SK-N-SH (cell line): ENCODE measurements at regions of chr5 and their contacts with region 1.

Region 1: DNA sequence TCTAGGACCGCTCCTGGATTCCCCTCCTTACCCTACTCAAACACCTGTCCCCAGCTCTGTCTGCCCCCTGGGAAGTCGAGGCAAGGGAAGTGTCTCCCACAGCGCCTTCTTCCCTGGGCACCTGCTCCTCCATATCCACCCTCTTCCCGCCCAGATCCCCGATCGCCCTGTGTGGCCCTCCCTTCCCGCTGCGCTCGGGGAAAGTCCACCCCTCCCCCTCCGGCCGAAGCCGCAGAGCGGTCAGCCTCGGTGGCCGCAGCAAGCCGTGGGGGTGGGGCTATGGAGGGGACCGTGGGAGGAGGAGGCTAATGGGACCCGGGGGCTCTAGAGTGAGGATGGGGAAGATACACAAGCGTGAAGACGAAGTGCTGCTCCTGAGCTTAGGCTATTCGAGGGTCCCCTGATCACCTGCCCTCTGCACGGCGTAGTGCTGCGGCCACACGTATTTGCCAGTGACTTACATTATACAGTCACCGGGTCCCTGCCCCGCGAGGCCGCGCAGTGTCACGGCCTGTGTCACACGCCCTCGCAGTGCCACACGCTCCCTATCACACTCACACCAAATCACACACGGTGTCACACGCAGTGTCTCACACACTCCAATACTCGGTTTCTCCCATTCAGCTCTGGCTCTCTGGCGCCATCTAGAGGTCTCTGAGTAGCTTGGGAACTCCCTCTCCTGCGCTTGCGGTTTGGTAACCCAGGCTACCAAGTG is 658 bp upstream of the PCDH1 start:
- DNase-seq: peak; percentile 74
- H3K4me3 ChIP-seq: peak overlapping the region; percentile 55 to 63
- H3K27ac ChIP-seq: no peak overlapping the region; a peak in 1 of 4 replicates
- H3K4me1 ChIP-seq: peaks cover 4 to 69% of the 10 kb centered on the region in 2 experiments; a peak in 2 of 4 replicates
- H3K27me3 ChIP-seq: peaks cover 78% of the 10 kb centered on the region
- CTCF ChIP-seq: peak; percentile 96
- EP300 ChIP-seq: no peak
- RAD21 ChIP-seq: peak; percentile 95

Region 2: DNA sequence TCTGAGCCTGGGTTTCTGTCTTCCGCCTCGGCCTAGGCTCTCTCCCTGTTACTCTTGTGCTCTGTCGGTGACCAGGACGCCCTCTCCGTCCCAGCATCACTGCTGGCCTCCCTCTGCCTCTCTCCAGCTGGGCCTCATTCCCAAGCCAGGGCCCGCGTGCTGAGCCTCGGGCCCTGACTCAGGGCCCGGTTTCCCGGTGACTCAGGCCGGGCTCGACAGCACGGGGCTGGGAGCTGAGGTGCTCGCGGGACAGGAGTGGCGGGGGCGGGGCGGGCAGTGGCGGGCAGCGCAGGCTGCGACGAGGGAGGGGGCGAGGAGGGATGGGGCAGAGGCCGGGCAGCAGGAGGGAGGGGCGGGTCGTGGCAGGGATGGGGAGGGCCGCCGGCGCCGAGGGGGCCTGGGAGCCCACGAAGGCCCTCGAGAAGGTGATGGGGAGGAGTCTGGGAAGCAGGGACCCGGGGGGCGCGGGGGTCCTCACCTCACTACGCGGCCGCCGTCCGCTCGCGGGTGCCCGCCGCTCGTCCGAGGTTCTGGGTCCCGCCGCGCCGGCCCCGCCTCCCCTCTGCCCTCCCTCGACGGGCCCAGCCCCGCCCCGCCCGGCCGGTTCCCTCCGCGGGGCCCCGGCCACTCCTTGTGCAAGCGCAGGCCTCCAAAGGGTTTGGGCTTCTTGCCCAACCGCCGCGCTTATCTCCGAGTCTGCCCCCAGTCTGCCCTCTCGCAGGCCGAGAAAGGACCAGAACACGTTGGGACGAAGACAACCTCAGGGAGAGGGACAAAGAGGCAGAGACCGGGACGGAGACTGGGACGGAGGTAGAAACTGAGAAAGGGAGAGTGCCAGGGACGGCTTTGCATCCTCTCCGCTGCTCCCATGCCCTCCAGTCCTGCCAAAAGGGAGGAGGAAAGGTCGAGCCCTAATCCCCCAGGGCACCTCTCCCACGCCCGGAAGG is 196.9 kb before region 1 on chr5 and contains the start of gene ARAP3:
- CTCF ChIA-PET with region 1: interaction called, 21 read pairs
- POLR2A ChIA-PET with region 1: interaction called, 6 read pairs
- DNase-seq: peak; percentile 91
- H3K4me3 ChIP-seq: peak within 1 kb of the TSS; percentile 52 to 55
- H3K27ac ChIP-seq: peak within 1 kb of the TSS; percentile 72 to 96
- H3K4me1 ChIP-seq: peaks cover 19 to 40% of the 10 kb centered on the region in 2 experiments; a peak in 3 of 4 replicates
- H3K27me3 ChIP-seq: no peaks in the 10 kb centered on the region
- CTCF ChIP-seq: no peak
- EP300 ChIP-seq: peak in 1 of 2 experiments; percentile 47; a peak in 1 of 4 replicates
- RAD21 ChIP-seq: no peak
- polyA plus RNA-seq, gene ARAP3: 5.5 and 6.5 TPM in 2 replicates

Region 3: GRCh38 chr5:141757402-141757801 is 121.5 kb before region 1 on chr5:
- CTCF ChIA-PET with region 1: interaction called, 19 read pairs
- POLR2A ChIA-PET with region 1: no interaction called
- DNase-seq: peak; percentile 80
- H3K4me3 ChIP-seq: no peak overlapping the region; a peak in 1 of 4 replicates
- H3K27ac ChIP-seq: no peak overlapping the region
- H3K4me1 ChIP-seq: peaks cover 0 to 27% of the 10 kb centered on the region in 2 experiments; a peak in 1 of 4 replicates
- H3K27me3 ChIP-seq: peaks cover under 1% of the 10 kb centered on the region
- CTCF ChIP-seq: peak; percentile 50
- EP300 ChIP-seq: no peak
- RAD21 ChIP-seq: peak; percentile 70

Region 4: GRCh38 chr5:141835928-141836670 is 42.8 kb before region 1 on chr5:
- CTCF ChIA-PET with region 1: interaction called, 162 read pairs
- POLR2A ChIA-PET with region 1: interaction called, 7 read pairs
- DNase-seq: no peak
- H3K4me3 ChIP-seq: no peak overlapping the region
- H3K27ac ChIP-seq: no peak overlapping the region
- H3K4me1 ChIP-seq: peaks cover 0 to 59% of the 10 kb centered on the region in 2 experiments; a peak in 2 of 4 replicates
- H3K27me3 ChIP-seq: peaks cover 17% of the 10 kb centered on the region; the same call in 1 of the 2 replicates
- CTCF ChIP-seq: no peak
- EP300 ChIP-seq: no peak
- RAD21 ChIP-seq: no peak

Region 5: DNA sequence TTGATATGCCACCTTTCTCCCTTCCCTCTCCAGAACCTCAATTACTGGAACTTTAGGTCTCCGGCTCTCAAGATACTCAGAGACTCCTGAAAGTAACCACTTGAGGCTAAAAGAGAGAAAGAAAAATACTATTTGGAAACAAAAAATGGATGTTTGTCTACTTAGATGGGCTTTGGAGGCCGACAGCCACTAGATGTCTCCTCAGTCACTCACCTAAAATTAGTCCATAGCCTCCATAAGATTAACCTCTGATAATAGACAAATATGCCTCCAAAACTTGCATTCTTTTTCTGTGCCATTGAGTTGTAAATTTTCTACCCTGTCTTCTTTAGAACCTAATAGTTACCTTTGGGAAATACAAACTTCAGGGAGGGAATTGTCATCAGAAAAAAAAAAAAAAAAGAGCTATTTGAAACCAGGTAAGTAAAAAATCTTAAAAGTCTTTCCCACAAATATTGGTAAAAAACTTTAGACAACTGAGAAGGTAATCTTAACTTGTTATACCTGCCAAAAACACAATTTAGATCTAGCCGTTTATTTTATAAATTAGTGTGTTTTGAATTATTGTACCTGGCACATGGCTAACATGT is 10.5 kb after region 1 on chr5:
- CTCF ChIA-PET with region 1: interaction called, 22 read pairs
- POLR2A ChIA-PET with region 1: no interaction called
- DNase-seq: peak; percentile 38
- H3K4me3 ChIP-seq: no peak overlapping the region
- H3K27ac ChIP-seq: no peak overlapping the region
- H3K4me1 ChIP-seq: no peaks in the 10 kb centered on the region
- H3K27me3 ChIP-seq: peaks cover 10% of the 10 kb centered on the region; the same call in 1 of the 2 replicates
- CTCF ChIP-seq: peak; percentile 48
- EP300 ChIP-seq: no peak
- RAD21 ChIP-seq: peak; percentile 69

Region 6: GRCh38 chr5:141960449-141961202 is 81.8 kb after region 1 on chr5:
- CTCF ChIA-PET with region 1: interaction called, 121 read pairs
- POLR2A ChIA-PET with region 1: interaction called, 3 read pairs
- DNase-seq: peak; percentile 87
- H3K4me3 ChIP-seq: peak overlapping the region in 1 of 2 experiments; percentile 43; a peak in 1 of 4 replicates
- H3K27ac ChIP-seq: no peak overlapping the region
- H3K4me1 ChIP-seq: peaks cover 0 to 17% of the 10 kb centered on the region in 2 experiments; a peak in 2 of 4 replicates
- H3K27me3 ChIP-seq: no peaks in the 10 kb centered on the region
- CTCF ChIP-seq: peak; percentile 89
- EP300 ChIP-seq: no peak
- RAD21 ChIP-seq: peak; percentile 90

Region 7: DNA sequence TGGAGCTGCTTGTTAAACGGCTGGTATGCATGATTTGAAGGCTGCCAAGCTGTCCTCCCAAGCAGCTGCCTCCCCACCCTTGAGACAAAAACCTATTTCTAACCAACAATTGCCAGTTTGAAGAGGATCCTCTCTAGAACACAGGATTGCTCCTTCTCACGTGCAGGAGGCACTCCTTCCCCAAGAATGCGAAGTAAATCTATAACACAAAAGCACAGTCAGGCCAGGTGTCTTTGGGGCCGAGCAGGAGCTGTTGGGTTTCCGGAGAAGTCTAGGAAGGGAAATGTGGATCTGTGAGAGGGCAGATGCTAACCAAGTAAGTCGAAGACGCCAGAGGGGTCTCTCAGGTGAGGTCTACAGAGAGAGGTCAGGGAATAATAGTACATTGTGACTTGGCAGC is 169.4 kb after region 1 on chr5:
- CTCF ChIA-PET with region 1: no interaction called
- POLR2A ChIA-PET with region 1: no interaction called
- DNase-seq: no peak
- H3K4me3 ChIP-seq: no peak overlapping the region
- H3K27ac ChIP-seq: no peak overlapping the region
- H3K4me1 ChIP-seq: peaks cover 0 to 4% of the 10 kb centered on the region in 2 experiments; a peak in 1 of 4 replicates
- H3K27me3 ChIP-seq: no peaks in the 10 kb centered on the region
- CTCF ChIP-seq: no peak
- EP300 ChIP-seq: no peak
- RAD21 ChIP-seq: no peak

Region 8: GRCh38 chr5:142133330-142134206 is 254.7 kb after region 1 on chr5:
- CTCF ChIA-PET with region 1: no interaction called
- POLR2A ChIA-PET with region 1: no interaction called
- DNase-seq: no peak
- H3K4me3 ChIP-seq: no peak overlapping the region
- H3K27ac ChIP-seq: no peak overlapping the region
- H3K4me1 ChIP-seq: peaks cover 0 to 6% of the 10 kb centered on the region in 2 experiments; a peak in 1 of 4 replicates
- H3K27me3 ChIP-seq: no peaks in the 10 kb centered on the region
- CTCF ChIP-seq: no peak
- EP300 ChIP-seq: no peak
- RAD21 ChIP-seq: no peak